CD14-positive monocyte (primary cell): ENCODE measurements at regions of chr21 and their contacts with region 1.

Region 1: GRCh38 chr21:15241997-15242736 is 177.4 kb upstream of the NRIP1 start:
- DNase-seq: no peak
- H3K4me3 ChIP-seq: no peak overlapping the region
- H3K4me3 Mint-ChIP-seq: no peak overlapping the region
- H3K27ac ChIP-seq: no peak overlapping the region
- H3K27ac Mint-ChIP-seq: peak overlapping the region in 1 of 7 donors; percentile 52
- H3K4me1 ChIP-seq: no peaks in the 10 kb centered on the region
- H3K4me1 Mint-ChIP-seq: peaks cover 5% of the 10 kb centered on the region
- H3K27me3 ChIP-seq: no peaks in the 10 kb centered on the region
- H3K27me3 Mint-ChIP-seq: peaks cover 0 to 1% (median 1%) of the 10 kb centered on the region in 3 donors
- CTCF ChIP-seq: no peak

Region 2: DNA sequence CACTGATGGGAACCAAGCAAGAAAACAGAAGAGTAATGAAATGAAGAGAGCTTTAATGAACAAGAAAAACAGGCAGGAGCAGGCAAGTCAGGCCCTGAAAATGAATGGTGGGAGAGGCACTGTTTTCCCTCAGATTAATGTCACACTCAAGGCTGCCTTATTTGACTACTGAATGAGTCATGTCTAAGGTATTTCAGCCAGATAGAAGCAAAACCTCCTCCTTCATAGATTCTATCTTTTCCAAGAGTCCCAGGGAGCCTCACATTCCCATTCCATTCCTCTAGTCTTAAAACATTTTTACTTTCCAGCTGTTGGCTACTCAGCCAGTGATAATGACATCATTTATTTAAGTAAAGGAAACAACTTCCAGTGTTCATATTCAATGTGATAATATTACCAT is 51.1 kb after region 1 on chr21:
- intact Hi-C with region 1: loop called in 1 of 2 experiments (anchors 10 kb)
- DNase-seq: no peak
- H3K4me3 ChIP-seq: no peak overlapping the region
- H3K4me3 Mint-ChIP-seq: no peak overlapping the region
- H3K27ac ChIP-seq: no peak overlapping the region
- H3K27ac Mint-ChIP-seq: no peak overlapping the region
- H3K4me1 ChIP-seq: no peaks in the 10 kb centered on the region
- H3K4me1 Mint-ChIP-seq: no peaks in the 10 kb centered on the region
- H3K27me3 ChIP-seq: no peaks in the 10 kb centered on the region
- H3K27me3 Mint-ChIP-seq: no peaks in the 10 kb centered on the region
- CTCF ChIP-seq: no peak